ENCODE measurements at regions of chr20 and their contacts with region 1.

Region 1: GRCh38 chr20:36861875-36862801 is 13.8 kb upstream of the TLDC2 start:
- DNase-seq: no peak
- ATAC-seq: no peak
- H3K4me3 ChIP-seq: no peak overlapping the region
- H3K4me3 Mint-ChIP-seq: peak overlapping the region in 9 of 10 donors; percentile 24 to 81 (median 63)
- H3K27ac ChIP-seq: no peak overlapping the region
- H3K27ac Mint-ChIP-seq: no peak overlapping the region
- H3K4me1 ChIP-seq: peaks cover 0 to 3% of the 10 kb centered on the region in 2 donors
- H3K4me1 Mint-ChIP-seq: peaks cover 5 to 25% (median 15%) of the 10 kb centered on the region in 7 donors
- H3K27me3 ChIP-seq: no peaks in the 10 kb centered on the region
- H3K27me3 Mint-ChIP-seq: peaks cover 0 to 45% (median 8%) of the 10 kb centered on the region in 5 donors

Region 2: GRCh38 chr20:36541227-36541763 is 320.8 kb before region 1 on chr20 and contains the start of gene MYL9:
- CTCF ChIA-PET with region 1: no interaction called
- POLR2A ChIA-PET with region 1: no interaction called
- intact Hi-C with region 1: no loop called
- DNase-seq: peak in 1 of 9 donors; percentile 27
- ATAC-seq: peak; percentile 81
- H3K4me3 ChIP-seq: no peak within 1 kb of the TSS
- H3K4me3 Mint-ChIP-seq: peak within 1 kb of the TSS in 2 of 10 donors; percentile 30 to 36
- H3K27ac ChIP-seq: no peak within 1 kb of the TSS
- H3K27ac Mint-ChIP-seq: peak within 1 kb of the TSS in 1 of 9 donors; percentile 9
- H3K4me1 ChIP-seq: no peaks in the 10 kb centered on the region
- H3K4me1 Mint-ChIP-seq: peaks cover 0 to 3% (median 0%) of the 10 kb centered on the region in 7 donors
- H3K27me3 ChIP-seq: no peaks in the 10 kb centered on the region
- H3K27me3 Mint-ChIP-seq: peaks cover 0 to 9% (median 0%) of the 10 kb centered on the region in 5 donors
- total RNA-seq, gene MYL9: 0.29 to 2.4 (median 0.29) TPM in 3 of 5 experiments, not detected in the others

Region 3: DNA sequence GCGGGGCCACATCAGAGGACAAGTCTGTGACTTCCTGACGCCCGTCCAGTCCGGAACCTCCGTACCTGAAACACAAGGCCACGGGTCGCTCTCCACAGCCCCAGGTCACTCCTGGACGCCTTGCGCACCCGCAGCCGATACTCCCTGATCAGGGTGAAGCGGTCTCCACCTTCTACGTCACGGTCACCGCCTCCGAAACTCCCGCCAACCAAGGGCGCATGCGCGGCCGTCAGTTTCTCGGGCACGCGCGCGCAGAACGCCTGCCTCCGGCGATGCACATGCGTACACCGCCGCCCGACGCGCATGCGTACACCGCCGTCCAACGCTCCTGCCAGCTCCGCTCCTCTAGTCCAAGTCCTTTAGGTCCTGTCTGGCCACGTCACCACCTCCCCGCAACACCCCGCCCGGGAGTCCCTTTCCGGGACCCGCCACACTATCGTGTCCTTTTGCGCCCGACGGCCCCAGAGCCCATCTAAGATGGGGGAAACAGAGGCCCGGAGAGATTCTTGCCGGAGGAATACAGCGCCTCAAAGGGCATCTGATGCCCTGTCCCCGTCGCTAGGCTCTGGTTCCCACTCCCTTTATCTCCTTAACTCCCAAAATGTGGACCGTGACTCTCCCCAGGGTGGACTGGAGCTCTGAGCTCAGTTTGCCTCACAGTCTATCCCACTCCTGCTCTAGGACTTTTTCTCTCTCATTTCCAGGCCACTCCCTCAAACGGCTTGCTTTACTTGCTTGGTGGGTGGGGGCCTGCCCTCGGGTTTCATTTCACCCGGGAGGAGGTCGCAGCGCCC is 88.3 kb before region 1 on chr20 and contains the start of gene DSN1:
- CTCF ChIA-PET with region 1: no interaction called
- POLR2A ChIA-PET with region 1: interaction called, 5 read pairs
- intact Hi-C with region 1: loop called (anchors 1 kb)
- DNase-seq: peak; percentile 94 to 100 (median 97)
- ATAC-seq: peak; percentile 90
- H3K4me3 ChIP-seq: peak within 1 kb of the TSS; percentile 96
- H3K4me3 Mint-ChIP-seq: peak within 1 kb of the TSS; percentile 83 to 98 (median 95)
- H3K27ac ChIP-seq: peak within 1 kb of the TSS; percentile 93
- H3K27ac Mint-ChIP-seq: peak within 1 kb of the TSS; percentile 90 to 100 (median 97)
- H3K4me1 ChIP-seq: peaks cover 8 to 13% of the 10 kb centered on the region in 2 donors
- H3K4me1 Mint-ChIP-seq: peaks cover 8 to 36% (median 27%) of the 10 kb centered on the region in 7 donors
- H3K27me3 ChIP-seq: no peaks in the 10 kb centered on the region
- H3K27me3 Mint-ChIP-seq: peaks cover 0 to 2% (median 0%) of the 10 kb centered on the region in 5 donors
- total RNA-seq, gene DSN1: 9.2 to 27.5 (median 13.4) TPM

Region 4: GRCh38 chr20:36827474-36827873 is 34.7 kb before region 1 on chr20:
- CTCF ChIA-PET with region 1: no interaction called
- POLR2A ChIA-PET with region 1: no interaction called
- intact Hi-C with region 1: loop called in 1 of 2 experiments (anchors 5 kb)
- DNase-seq: no peak
- ATAC-seq: no peak
- H3K4me3 ChIP-seq: no peak overlapping the region
- H3K4me3 Mint-ChIP-seq: peak overlapping the region in 1 of 10 donors; percentile 68
- H3K27ac ChIP-seq: no peak overlapping the region
- H3K27ac Mint-ChIP-seq: peak overlapping the region in 1 of 9 donors; percentile 69
- H3K4me1 ChIP-seq: no peaks in the 10 kb centered on the region
- H3K4me1 Mint-ChIP-seq: peaks cover 0 to 23% (median 0%) of the 10 kb centered on the region in 7 donors
- H3K27me3 ChIP-seq: no peaks in the 10 kb centered on the region
- H3K27me3 Mint-ChIP-seq: no peaks in the 10 kb centered on the region

Region 5: GRCh38 chr20:36835453-36836198 is 26.5 kb before region 1 on chr20:
- CTCF ChIA-PET with region 1: interaction called, 3 read pairs
- POLR2A ChIA-PET with region 1: no interaction called
- intact Hi-C with region 1: loop called in 1 of 2 experiments (anchors 2 kb)
- DNase-seq: peak; percentile 56 to 85 (median 72)
- ATAC-seq: peak; percentile 99
- H3K4me3 ChIP-seq: peak overlapping the region; percentile 63
- H3K4me3 Mint-ChIP-seq: peak overlapping the region; percentile 71 to 92 (median 82)
- H3K27ac ChIP-seq: peak overlapping the region; percentile 54
- H3K27ac Mint-ChIP-seq: peak overlapping the region in 4 of 9 donors; percentile 75 to 92 (median 82)
- H3K4me1 ChIP-seq: peaks cover 5 to 9% of the 10 kb centered on the region in 2 donors
- H3K4me1 Mint-ChIP-seq: peaks cover 5 to 32% (median 10%) of the 10 kb centered on the region in 7 donors
- H3K27me3 ChIP-seq: no peaks in the 10 kb centered on the region
- H3K27me3 Mint-ChIP-seq: no peaks in the 10 kb centered on the region